ENCODE measurements at regions of chr3 and their contacts with region 1.

Region 1: DNA sequence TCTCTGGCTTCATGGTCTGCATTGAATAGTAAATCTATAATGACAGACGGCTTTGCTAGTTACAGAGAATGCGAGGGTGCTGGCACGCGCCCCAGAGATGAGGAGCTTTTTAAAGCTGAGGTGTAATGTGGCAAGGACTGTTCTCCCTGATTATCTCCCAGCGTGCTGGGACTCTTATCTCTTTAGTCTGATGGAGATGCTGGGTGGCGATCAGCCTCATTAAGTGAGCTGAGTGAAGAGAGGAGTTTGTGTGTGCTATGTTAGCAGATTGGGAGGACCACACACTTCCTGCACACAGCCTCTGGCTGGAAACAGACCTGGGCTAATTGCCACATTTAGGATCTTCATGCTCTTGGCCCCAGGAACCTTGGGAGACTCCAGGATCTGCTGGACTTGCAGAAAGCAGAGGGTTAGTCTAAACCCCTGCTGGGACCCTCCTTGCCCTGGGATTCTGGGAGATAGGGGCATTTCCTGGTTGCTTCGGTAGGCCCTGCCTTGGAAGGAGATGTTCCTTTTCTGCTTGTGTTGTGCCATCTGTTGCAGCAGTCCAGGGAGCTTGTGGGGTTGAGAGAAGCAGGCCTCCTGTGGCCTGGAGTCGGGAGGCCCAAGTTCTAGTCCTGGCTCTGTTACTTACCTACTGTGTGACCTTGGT is 15.0 kb downstream of the PDIA5 start:
- DNase-seq: no peak
- H3K4me3 Mint-ChIP-seq: no peak overlapping the region
- H3K27ac Mint-ChIP-seq: peak overlapping the region; percentile 50
- H3K4me1 Mint-ChIP-seq: peaks cover 24% of the 10 kb centered on the region
- H3K27me3 Mint-ChIP-seq: no peaks in the 10 kb centered on the region
- CTCF ChIP-seq: no peak

Region 2: DNA sequence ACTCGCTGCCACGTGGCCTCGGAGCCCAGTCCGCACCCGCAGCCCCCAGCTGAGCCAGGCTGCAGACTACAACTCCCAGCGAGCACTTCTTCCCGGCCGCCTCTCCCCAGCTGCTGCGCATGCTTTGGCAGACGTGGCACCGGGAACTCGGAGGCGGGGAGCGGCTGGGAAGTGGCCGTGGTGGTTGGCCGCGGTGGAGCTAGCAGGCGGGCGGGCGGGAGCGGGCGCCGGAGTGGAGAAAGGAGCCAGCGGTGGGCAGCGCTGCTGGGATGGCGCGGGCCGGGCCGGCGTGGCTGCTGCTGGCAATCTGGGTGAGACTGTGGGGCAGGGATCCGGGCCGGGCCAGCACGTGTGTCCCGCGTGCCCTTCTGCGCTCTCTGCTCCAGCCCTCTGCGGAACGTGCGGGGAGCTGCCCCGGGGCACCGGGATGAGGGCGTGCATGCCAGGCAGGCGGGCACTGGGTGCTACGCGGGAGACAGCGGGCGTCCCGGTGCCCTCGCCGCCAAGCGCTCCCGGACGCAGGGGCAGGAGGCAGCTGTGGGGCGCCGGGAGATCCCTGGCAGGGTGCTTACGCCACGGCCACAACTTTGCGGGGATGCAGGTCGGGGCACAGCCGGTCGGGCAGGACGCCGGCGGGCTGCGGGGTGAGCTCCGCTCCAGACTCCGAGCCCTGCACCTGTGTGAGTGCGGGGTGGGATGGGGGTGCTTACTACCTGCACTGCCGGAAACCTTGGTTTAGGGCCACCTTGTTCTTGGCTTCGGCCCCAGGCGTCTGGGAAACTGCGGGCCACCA is 14.8 kb before region 1 on chr3 and contains the start of gene PDIA5:
- CTCF ChIA-PET with region 1: no interaction called
- POLR2A ChIA-PET with region 1: interaction called, 22 read pairs
- intact Hi-C with region 1: no loop called
- DNase-seq: peak; percentile 92
- H3K4me3 Mint-ChIP-seq: peak within 1 kb of the TSS; percentile 87
- H3K27ac Mint-ChIP-seq: peak within 1 kb of the TSS; percentile 84
- H3K4me1 Mint-ChIP-seq: peaks cover 30% of the 10 kb centered on the region
- H3K27me3 Mint-ChIP-seq: no peaks in the 10 kb centered on the region
- CTCF ChIP-seq: no peak
- total RNA-seq, gene PDIA5: 42.7 and 47.7 TPM in 2 replicates

Measured in MCF 10A (cell line).